ENCODE measurements at regions of chr21 and their contacts with region 1.

Region 1: GRCh38 chr21:17598437-17598836 is 14.3 kb downstream of the BTG3 start:
- DNase-seq: no peak
- H3K4me3 Mint-ChIP-seq: no peak overlapping the region
- H3K27ac Mint-ChIP-seq: peak overlapping the region; percentile 31
- H3K4me1 Mint-ChIP-seq: peaks cover 29% of the 10 kb centered on the region
- H3K27me3 Mint-ChIP-seq: no peaks in the 10 kb centered on the region

Region 2: GRCh38 chr21:17611414-17612022 is 13.1 kb after region 1 on chr21:
- intact Hi-C with region 1: loop called (anchors 2 kb)
- DNase-seq: peak; percentile 76
- H3K4me3 Mint-ChIP-seq: peak overlapping the region; percentile 88
- H3K27ac Mint-ChIP-seq: peak overlapping the region; percentile 97
- H3K4me1 Mint-ChIP-seq: peaks cover 58% of the 10 kb centered on the region
- H3K27me3 Mint-ChIP-seq: no peaks in the 10 kb centered on the region